AG04449 (cell line): ENCODE measurements at regions of chr3 and their contacts with region 1.

Region 1: GRCh38 chr3:114336122-114336697 is 42.4 kb downstream of the TIGIT start:
- DNase-seq: no peak
- H3K4me3 ChIP-seq: no peak overlapping the region
- CTCF ChIP-seq: peak; percentile 20

Region 2: GRCh38 chr3:114207768-114208167 is 128.4 kb before region 1 on chr3:
- CTCF ChIA-PET with region 1: no interaction called
- POLR2A ChIA-PET with region 1: no interaction called
- DNase-seq: no peak
- H3K4me3 ChIP-seq: no peak overlapping the region
- CTCF ChIP-seq: no peak

Region 3: DNA sequence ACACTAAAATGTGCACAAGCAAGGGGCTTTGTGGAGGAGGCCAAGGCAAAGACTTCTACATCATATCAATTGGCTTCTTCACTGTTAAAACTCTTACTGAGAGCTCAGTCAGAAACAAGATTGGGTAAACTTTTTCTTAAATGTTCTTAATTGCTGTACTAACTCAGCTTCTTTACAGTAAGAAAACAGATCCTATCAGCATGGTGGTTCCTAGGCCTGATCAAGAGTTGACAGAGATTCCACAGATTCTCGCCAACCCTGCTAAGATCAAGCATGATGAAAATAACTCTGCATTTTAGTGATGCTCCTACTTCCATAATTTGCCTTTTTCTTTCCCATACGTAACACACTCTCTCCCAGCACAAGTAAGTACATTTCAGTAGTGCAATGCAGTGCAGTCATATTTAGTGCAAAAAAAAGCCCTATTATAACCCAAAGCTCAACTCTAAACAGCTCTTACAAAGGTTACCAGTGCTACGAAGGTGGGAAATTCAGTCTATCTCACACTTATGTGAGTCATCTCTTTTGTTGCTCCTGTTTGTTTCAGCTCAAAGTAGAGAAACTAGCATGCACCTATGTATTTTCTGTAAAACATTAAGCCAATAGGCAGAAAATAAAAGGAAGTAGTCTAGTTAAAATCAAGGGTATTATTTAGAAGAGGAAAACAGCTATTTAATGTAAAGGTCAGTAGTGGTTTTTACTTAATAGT is 12.5 kb before region 1 on chr3:
- CTCF ChIA-PET with region 1: interaction called, 15 read pairs
- POLR2A ChIA-PET with region 1: no interaction called
- DNase-seq: no peak
- H3K4me3 ChIP-seq: no peak overlapping the region
- CTCF ChIP-seq: no peak